Activated T-helper 2 cell treated with anti-CD3 and anti-CD28 coated beads, Interferon-gamma antibody, Interleukin-2, Interleukin-4, amounts not matched to agents 10 μg/mL and 5 μg/mL and 100 μg/mL, durations not matched to agents 14 hours and 24 hours and 36 hours (primary cell): ENCODE measurements at regions of chr5 and their contacts with region 1.

Region 1: GRCh38 chr5:143403593-143404415 is at the start of gene NR3C1:
- DNase-seq: peak; percentile 81
- H3K4me3 Mint-ChIP-seq: peak within 1 kb of the TSS; percentile 88
- H3K27ac Mint-ChIP-seq: peak within 1 kb of the TSS; percentile 97
- H3K4me1 Mint-ChIP-seq: peaks cover 45% of the 10 kb centered on the region
- H3K27me3 Mint-ChIP-seq: no peaks in the 10 kb centered on the region
- total RNA-seq, gene NR3C1: 51.3 and 52.0 TPM in 2 replicates

Region 2: GRCh38 chr5:142922223-142922952 is 481.4 kb before region 1 on chr5:
- intact Hi-C with region 1: loop called (anchors 5 kb)
- DNase-seq: no peak
- H3K4me3 Mint-ChIP-seq: no peak overlapping the region
- H3K27ac Mint-ChIP-seq: no peak overlapping the region
- H3K4me1 Mint-ChIP-seq: peaks cover 33% of the 10 kb centered on the region
- H3K27me3 Mint-ChIP-seq: no peaks in the 10 kb centered on the region

Region 3: GRCh38 chr5:143051244-143052058 is 352.4 kb before region 1 on chr5:
- intact Hi-C with region 1: loop called (anchors 2 kb)
- DNase-seq: no peak
- H3K4me3 Mint-ChIP-seq: no peak overlapping the region
- H3K27ac Mint-ChIP-seq: no peak overlapping the region
- H3K4me1 Mint-ChIP-seq: peaks cover 62% of the 10 kb centered on the region
- H3K27me3 Mint-ChIP-seq: no peaks in the 10 kb centered on the region

Region 4: GRCh38 chr5:143124593-143124992 is 279.2 kb before region 1 on chr5:
- intact Hi-C with region 1: loop called (anchors 5 kb)
- DNase-seq: no peak
- H3K4me3 Mint-ChIP-seq: no peak overlapping the region
- H3K27ac Mint-ChIP-seq: peak overlapping the region; percentile 37
- H3K4me1 Mint-ChIP-seq: peaks cover 48% of the 10 kb centered on the region
- H3K27me3 Mint-ChIP-seq: no peaks in the 10 kb centered on the region

Region 5: GRCh38 chr5:143222287-143223231 is 181.2 kb before region 1 on chr5:
- intact Hi-C with region 1: loop called (anchors 2 kb)
- DNase-seq: peak; percentile 74
- H3K4me3 Mint-ChIP-seq: peak overlapping the region; percentile 43
- H3K27ac Mint-ChIP-seq: peak overlapping the region; percentile 97
- H3K4me1 Mint-ChIP-seq: peaks cover 82% of the 10 kb centered on the region
- H3K27me3 Mint-ChIP-seq: no peaks in the 10 kb centered on the region

Region 6: GRCh38 chr5:143435210-143435657 is 31.4 kb after region 1 on chr5:
- intact Hi-C with region 1: loop called (anchors 1 kb)
- DNase-seq: no peak
- H3K4me3 Mint-ChIP-seq: peak overlapping the region; percentile 80
- H3K27ac Mint-ChIP-seq: peak overlapping the region; percentile 89
- H3K4me1 Mint-ChIP-seq: peaks cover 60% of the 10 kb centered on the region
- H3K27me3 Mint-ChIP-seq: no peaks in the 10 kb centered on the region

Region 7: GRCh38 chr5:144170276-144171024 is 766.6 kb after region 1 on chr5 and contains the starts of genes KCTD16 and YIPF5:
- intact Hi-C with region 1: loop called (anchors 5 kb)
- DNase-seq: peak; percentile 96
- H3K4me3 Mint-ChIP-seq: peak within 1 kb of the TSS; percentile 99
- H3K27ac Mint-ChIP-seq: peak within 1 kb of the TSS; percentile 93
- H3K4me1 Mint-ChIP-seq: peaks cover 34% of the 10 kb centered on the region
- H3K27me3 Mint-ChIP-seq: peaks cover 12% of the 10 kb centered on the region
- total RNA-seq, gene KCTD16: not detected in 2 replicates
- total RNA-seq, gene YIPF5: 34.0 and 34.2 TPM in 2 replicates